Dendritic cell treated with granulocyte-macrophage colony-stimulating factor and Interleukin-4, amounts not matched to agents 40 ng/mL and 50 ng/mL, for 4 days (primary cell): ENCODE measurements at regions of chr4 and their contacts with region 1.

Region 1: DNA sequence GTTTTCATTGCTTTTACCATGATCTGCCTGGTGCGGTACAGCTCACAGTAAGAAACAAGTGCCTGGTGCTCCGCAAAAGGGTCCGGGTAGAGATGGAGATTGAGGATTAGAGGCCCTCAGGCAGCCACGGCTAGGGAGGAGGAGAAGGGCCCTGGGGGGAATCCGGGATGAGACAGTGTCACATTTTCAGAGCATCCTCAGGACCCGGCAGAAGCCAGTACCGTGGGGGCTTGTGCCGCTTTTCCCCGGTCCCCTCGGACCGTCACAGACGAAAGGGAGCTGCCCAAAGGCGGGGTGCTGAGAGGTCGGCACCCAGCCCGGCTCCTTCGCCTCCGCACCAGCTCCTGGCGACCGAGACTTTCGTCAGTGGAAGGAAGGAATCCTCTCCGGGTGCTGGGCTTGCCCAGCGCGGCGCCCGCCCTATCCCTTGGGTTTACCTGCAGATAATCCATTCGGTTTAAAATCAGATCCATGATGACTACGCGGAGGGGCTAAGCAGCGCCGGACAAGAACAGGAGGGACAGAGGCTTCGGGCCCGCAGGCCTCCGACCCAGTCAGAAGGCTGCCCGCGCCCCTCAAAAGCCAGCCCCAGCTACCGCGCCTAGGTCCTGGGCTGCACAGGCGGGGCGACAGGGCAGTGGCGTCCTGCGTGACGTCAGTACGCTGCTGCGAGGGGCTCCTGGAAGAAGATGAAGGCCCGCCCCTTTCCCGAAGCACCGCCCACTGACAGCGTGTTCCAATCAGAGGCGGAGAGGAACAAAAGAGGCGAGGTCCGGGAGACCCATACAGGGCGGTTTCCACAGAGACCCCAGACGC is at the start of gene BBS7:
- H3K4me3 Mint-ChIP-seq: peak within 1 kb of the TSS; percentile 92
- H3K27ac Mint-ChIP-seq: peak within 1 kb of the TSS; percentile 91
- H3K4me1 Mint-ChIP-seq: peaks cover 13% of the 10 kb centered on the region
- H3K27me3 Mint-ChIP-seq: peaks cover 6% of the 10 kb centered on the region

Region 2: GRCh38 chr4:121696581-121697461 is 173.2 kb before region 1 on chr4 and contains the start of gene ANXA5:
- intact Hi-C with region 1: loop called (anchors 2 kb)
- H3K4me3 Mint-ChIP-seq: peak within 1 kb of the TSS; percentile 100
- H3K27ac Mint-ChIP-seq: peak within 1 kb of the TSS; percentile 99
- H3K4me1 Mint-ChIP-seq: peaks cover 38% of the 10 kb centered on the region
- H3K27me3 Mint-ChIP-seq: peaks cover 25% of the 10 kb centered on the region

Region 3: GRCh38 chr4:121823505-121824170 is 46.4 kb before region 1 on chr4 and contains the start of gene CCNA2:
- intact Hi-C with region 1: loop called (anchors 1 kb)
- H3K4me3 Mint-ChIP-seq: peak within 1 kb of the TSS; percentile 96
- H3K27ac Mint-ChIP-seq: peak within 1 kb of the TSS; percentile 75
- H3K4me1 Mint-ChIP-seq: peaks cover 19% of the 10 kb centered on the region
- H3K27me3 Mint-ChIP-seq: no peaks in the 10 kb centered on the region

Region 4: DNA sequence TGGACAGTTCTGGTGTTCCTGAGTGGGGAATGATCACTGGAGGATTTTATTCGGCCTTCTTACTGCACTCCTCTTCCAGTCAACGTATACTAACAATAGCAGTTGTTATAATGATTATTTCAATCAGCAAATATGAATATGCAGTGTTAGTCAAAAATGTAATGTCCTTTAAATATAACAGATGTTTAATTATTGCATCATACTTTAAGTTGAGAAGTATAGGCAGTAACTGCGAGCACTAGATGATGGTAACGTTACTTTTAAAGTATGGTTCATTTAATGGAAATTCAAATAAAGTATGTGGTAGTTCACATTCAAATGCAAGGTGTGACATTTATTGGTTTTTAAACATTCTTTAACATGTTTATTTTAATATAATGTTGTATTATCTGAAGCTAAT is 276.6 kb after region 1 on chr4:
- intact Hi-C with region 1: loop called (anchors 5 kb)
- H3K4me3 Mint-ChIP-seq: no peak overlapping the region
- H3K27ac Mint-ChIP-seq: no peak overlapping the region
- H3K4me1 Mint-ChIP-seq: peaks cover 13% of the 10 kb centered on the region
- H3K27me3 Mint-ChIP-seq: peaks cover 11% of the 10 kb centered on the region